HCT116 (cell line): ENCODE measurements at regions of chr3 and their contacts with region 1.

Region 1: DNA sequence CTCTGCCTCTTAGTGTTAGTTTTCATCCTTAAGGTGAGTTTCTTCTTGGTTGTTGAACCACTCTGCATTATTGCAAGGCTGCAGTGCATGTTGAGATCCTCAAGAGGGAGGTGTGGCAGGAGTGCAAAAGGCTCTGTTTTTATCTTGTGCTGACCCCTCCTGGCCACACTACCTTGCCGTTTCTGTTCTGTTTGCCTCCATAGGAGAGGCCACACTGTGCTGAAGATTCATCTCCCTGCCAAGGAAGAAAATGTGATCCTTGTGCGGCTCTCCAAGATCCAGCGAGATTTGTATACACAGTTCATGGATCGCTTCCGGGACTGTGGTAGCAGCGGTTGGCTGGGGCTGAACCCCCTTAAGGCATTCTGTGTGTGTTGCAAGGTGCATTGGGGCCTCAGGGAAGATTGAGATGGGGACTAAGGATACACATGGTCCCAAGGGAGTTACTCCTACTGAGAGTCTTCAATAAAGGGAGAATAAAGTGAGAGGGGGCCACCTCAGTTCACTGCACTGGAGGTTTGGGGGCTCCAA is 33.0 kb upstream of the TEX264 start:
- DNase-seq: peak; percentile 73
- ATAC-seq: peak; percentile 97
- H3K4me3 ChIP-seq: no peak overlapping the region
- H3K27ac ChIP-seq: no peak overlapping the region
- H3K4me1 ChIP-seq: no peaks in the 10 kb centered on the region; a peak in 1 of 4 replicates
- H3K27me3 ChIP-seq: no peaks in the 10 kb centered on the region
- CTCF ChIP-seq: peak; percentile 94 to 99 (median 95)
- POLR2A ChIP-seq: no peak
- RAD21 ChIP-seq: peak; percentile 82

Region 2: DNA sequence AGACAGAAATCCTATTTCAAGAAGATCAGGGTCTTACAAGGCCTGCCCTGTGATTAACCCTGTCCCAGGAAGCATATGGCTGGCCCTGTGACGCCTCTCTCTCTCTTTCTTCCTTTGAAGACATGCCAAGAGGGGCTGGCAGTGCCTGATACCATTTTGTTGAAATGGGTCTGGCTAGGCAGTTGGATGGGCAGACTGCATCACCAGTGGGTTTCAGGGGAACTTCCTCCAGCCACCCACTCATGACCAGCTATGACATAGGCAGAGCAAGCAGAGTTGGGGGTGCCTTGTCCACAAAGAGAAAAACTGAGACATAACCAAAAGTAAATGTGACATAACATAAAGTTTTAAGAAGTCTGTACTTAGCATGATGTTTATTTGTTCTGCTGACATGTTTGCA is 284.3 kb before region 1 on chr3:
- CTCF ChIA-PET with region 1: no interaction called
- POLR2A ChIA-PET with region 1: no interaction called
- RAD21 ChIA-PET with region 1: no interaction called
- intact Hi-C with region 1: no loop called
- DNase-seq: no peak
- ATAC-seq: no peak
- H3K4me3 ChIP-seq: no peak overlapping the region
- H3K27ac ChIP-seq: no peak overlapping the region
- H3K4me1 ChIP-seq: peaks cover 0 to 4% of the 10 kb centered on the region in 2 experiments; a peak in 1 of 4 replicates
- H3K27me3 ChIP-seq: no peaks in the 10 kb centered on the region
- CTCF ChIP-seq: no peak
- POLR2A ChIP-seq: no peak
- RAD21 ChIP-seq: no peak

Region 3: GRCh38 chr3:51498876-51499738 is 138.9 kb before region 1 on chr3:
- CTCF ChIA-PET with region 1: interaction called, 10 read pairs
- POLR2A ChIA-PET with region 1: interaction called, 7 read pairs
- RAD21 ChIA-PET with region 1: interaction called in 1 of 2 experiments, 3 read pairs
- intact Hi-C with region 1: loop called (anchors 1 kb)
- DNase-seq: peak; percentile 84
- ATAC-seq: peak; percentile 81
- H3K4me3 ChIP-seq: peak overlapping the region; percentile 62 to 72
- H3K27ac ChIP-seq: peak overlapping the region; percentile 89
- H3K4me1 ChIP-seq: peaks cover 10 to 17% of the 10 kb centered on the region in 2 experiments; a peak in 3 of 4 replicates
- H3K27me3 ChIP-seq: no peaks in the 10 kb centered on the region
- CTCF ChIP-seq: no peak
- POLR2A ChIP-seq: peak; percentile 9
- RAD21 ChIP-seq: no peak

Region 4: DNA sequence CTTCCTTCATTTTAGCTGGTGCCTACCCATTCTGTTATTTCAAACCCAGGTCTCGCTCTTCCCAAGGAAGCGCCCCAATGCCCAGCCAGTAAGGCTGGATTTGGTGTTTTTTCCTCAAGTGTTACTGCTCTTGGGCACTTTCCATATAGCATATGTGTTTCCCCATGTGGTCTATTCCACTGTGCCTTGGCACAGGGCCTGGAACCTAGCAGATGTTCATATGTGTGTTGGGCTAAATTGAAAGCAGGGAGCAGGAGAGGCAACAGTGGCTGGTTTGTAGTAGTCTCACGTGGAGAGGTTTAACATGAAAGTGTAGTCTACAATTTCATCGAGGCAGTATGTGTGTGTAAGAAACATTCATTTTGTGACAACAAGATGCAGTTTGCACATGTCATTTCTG is 15.1 kb before region 1 on chr3:
- CTCF ChIA-PET with region 1: no interaction called
- POLR2A ChIA-PET with region 1: no interaction called
- RAD21 ChIA-PET with region 1: no interaction called
- intact Hi-C with region 1: no loop called
- DNase-seq: no peak
- ATAC-seq: no peak
- H3K4me3 ChIP-seq: no peak overlapping the region
- H3K27ac ChIP-seq: no peak overlapping the region
- H3K4me1 ChIP-seq: no peaks in the 10 kb centered on the region; a peak in 1 of 4 replicates
- H3K27me3 ChIP-seq: no peaks in the 10 kb centered on the region
- CTCF ChIP-seq: no peak
- POLR2A ChIP-seq: no peak
- RAD21 ChIP-seq: no peak

Region 5: GRCh38 chr3:51799879-51800749 is 162.1 kb after region 1 on chr3:
- CTCF ChIA-PET with region 1: no interaction called
- POLR2A ChIA-PET with region 1: no interaction called
- RAD21 ChIA-PET with region 1: no interaction called
- intact Hi-C with region 1: no loop called
- DNase-seq: peak; percentile 55
- ATAC-seq: peak; percentile 79
- H3K4me3 ChIP-seq: no peak overlapping the region
- H3K27ac ChIP-seq: no peak overlapping the region
- H3K4me1 ChIP-seq: peaks cover 0 to 14% of the 10 kb centered on the region in 2 experiments; a peak in 2 of 4 replicates
- H3K27me3 ChIP-seq: no peaks in the 10 kb centered on the region
- CTCF ChIP-seq: peak; percentile 75 to 91 (median 87)
- POLR2A ChIP-seq: no peak
- RAD21 ChIP-seq: peak; percentile 78